PC-9 (cell line): ENCODE measurements at regions of chr3 and their contacts with region 1.

Region 1: GRCh38 chr3:147191795-147192385 is 214.5 kb downstream of the ZIC4 start:
- DNase-seq: peak in 1 of 2 experiments; percentile 25
- H3K4me3 ChIP-seq: no peak overlapping the region
- H3K27ac ChIP-seq: no peak overlapping the region
- H3K4me1 ChIP-seq: no peaks in the 10 kb centered on the region
- H3K27me3 ChIP-seq: no peaks in the 10 kb centered on the region
- CTCF ChIP-seq: peak; percentile 84

Region 2: DNA sequence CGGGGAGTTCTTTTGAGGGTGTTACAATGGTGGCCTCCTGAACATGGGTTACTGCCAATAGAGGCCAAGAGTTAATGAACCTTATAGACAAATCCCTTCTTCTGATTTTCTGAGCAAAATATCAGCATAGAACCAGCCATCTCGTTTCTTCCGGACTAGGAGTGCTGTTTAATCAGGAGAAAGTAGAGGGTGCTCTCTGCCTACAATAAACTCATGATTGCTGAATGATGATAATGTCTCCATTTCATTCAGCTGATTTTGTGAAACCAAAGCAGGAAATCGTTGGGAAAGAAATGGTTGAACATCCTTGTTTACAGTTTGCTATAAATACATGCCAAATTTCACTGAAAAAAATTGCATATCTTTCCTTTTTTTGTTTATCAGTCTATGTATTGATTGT is 444.0 kb before region 1 on chr3:
- CTCF ChIA-PET with region 1: interaction called, 5 read pairs
- POLR2A ChIA-PET with region 1: no interaction called
- intact Hi-C with region 1: loop called (anchors 1 kb)
- DNase-seq: no peak
- H3K4me3 ChIP-seq: no peak overlapping the region
- H3K27ac ChIP-seq: no peak overlapping the region
- H3K4me1 ChIP-seq: no peaks in the 10 kb centered on the region
- H3K27me3 ChIP-seq: no peaks in the 10 kb centered on the region
- CTCF ChIP-seq: no peak

Region 3: GRCh38 chr3:146827391-146827790 is 364.5 kb before region 1 on chr3:
- CTCF ChIA-PET with region 1: no interaction called
- POLR2A ChIA-PET with region 1: no interaction called
- intact Hi-C with region 1: loop called (anchors 5 kb)
- DNase-seq: no peak
- H3K4me3 ChIP-seq: no peak overlapping the region
- H3K27ac ChIP-seq: no peak overlapping the region
- H3K4me1 ChIP-seq: no peaks in the 10 kb centered on the region
- H3K27me3 ChIP-seq: no peaks in the 10 kb centered on the region
- CTCF ChIP-seq: no peak